PC-3 (cell line): ENCODE measurements at regions of chrX and their contacts with region 1.

Region 1: GRCh38 chrX:100636321-100636991 is at the start of gene TSPAN6:
- DNase-seq: peak; percentile 91
- ATAC-seq: peak; percentile 100
- H3K4me3 ChIP-seq: peak within 1 kb of the TSS; percentile 84
- H3K27ac ChIP-seq: no peak within 1 kb of the TSS
- H3K4me1 ChIP-seq: peaks cover 12% of the 10 kb centered on the region
- H3K27me3 ChIP-seq: no peaks in the 10 kb centered on the region
- CTCF ChIP-seq: peak; percentile 72
- total RNA-seq, gene TSPAN6: 35.2 and 47.4 TPM in 2 replicates

Region 2: GRCh38 chrX:98897191-98897590 is 1739.3 kb before region 1 on chrX:
- CTCF ChIA-PET with region 1: no interaction called
- POLR2A ChIA-PET with region 1: no interaction called
- intact Hi-C with region 1: no loop called
- DNase-seq: no peak
- ATAC-seq: no peak
- H3K4me3 ChIP-seq: no peak overlapping the region
- H3K27ac ChIP-seq: no peak overlapping the region
- H3K4me1 ChIP-seq: no peaks in the 10 kb centered on the region
- H3K27me3 ChIP-seq: no peaks in the 10 kb centered on the region
- CTCF ChIP-seq: no peak

Region 3: GRCh38 chrX:100615005-100615404 is 21.5 kb before region 1 on chrX:
- CTCF ChIA-PET with region 1: interaction called, 21 read pairs
- POLR2A ChIA-PET with region 1: no interaction called
- intact Hi-C with region 1: loop called (anchors 1 kb)
- DNase-seq: peak; percentile 78
- ATAC-seq: peak; percentile 63
- H3K4me3 ChIP-seq: no peak overlapping the region
- H3K27ac ChIP-seq: no peak overlapping the region
- H3K4me1 ChIP-seq: no peaks in the 10 kb centered on the region
- H3K27me3 ChIP-seq: no peaks in the 10 kb centered on the region
- CTCF ChIP-seq: peak; percentile 67

Region 4: GRCh38 chrX:100662796-100663195 is 26.3 kb after region 1 on chrX:
- CTCF ChIA-PET with region 1: no interaction called
- POLR2A ChIA-PET with region 1: no interaction called
- intact Hi-C with region 1: loop called (anchors 2 kb)
- DNase-seq: no peak
- ATAC-seq: no peak
- H3K4me3 ChIP-seq: no peak overlapping the region
- H3K27ac ChIP-seq: no peak overlapping the region
- H3K4me1 ChIP-seq: peaks cover 20% of the 10 kb centered on the region
- H3K27me3 ChIP-seq: no peaks in the 10 kb centered on the region
- CTCF ChIP-seq: no peak

Region 5: GRCh38 chrX:100695302-100695701 is 58.8 kb after region 1 on chrX:
- CTCF ChIA-PET with region 1: no interaction called
- POLR2A ChIA-PET with region 1: no interaction called
- intact Hi-C with region 1: no loop called
- DNase-seq: peak; percentile 54
- ATAC-seq: no peak
- H3K4me3 ChIP-seq: no peak overlapping the region
- H3K27ac ChIP-seq: peak overlapping the region; percentile 76
- H3K4me1 ChIP-seq: peaks cover 25% of the 10 kb centered on the region
- H3K27me3 ChIP-seq: no peaks in the 10 kb centered on the region
- CTCF ChIP-seq: no peak

Region 6: DNA sequence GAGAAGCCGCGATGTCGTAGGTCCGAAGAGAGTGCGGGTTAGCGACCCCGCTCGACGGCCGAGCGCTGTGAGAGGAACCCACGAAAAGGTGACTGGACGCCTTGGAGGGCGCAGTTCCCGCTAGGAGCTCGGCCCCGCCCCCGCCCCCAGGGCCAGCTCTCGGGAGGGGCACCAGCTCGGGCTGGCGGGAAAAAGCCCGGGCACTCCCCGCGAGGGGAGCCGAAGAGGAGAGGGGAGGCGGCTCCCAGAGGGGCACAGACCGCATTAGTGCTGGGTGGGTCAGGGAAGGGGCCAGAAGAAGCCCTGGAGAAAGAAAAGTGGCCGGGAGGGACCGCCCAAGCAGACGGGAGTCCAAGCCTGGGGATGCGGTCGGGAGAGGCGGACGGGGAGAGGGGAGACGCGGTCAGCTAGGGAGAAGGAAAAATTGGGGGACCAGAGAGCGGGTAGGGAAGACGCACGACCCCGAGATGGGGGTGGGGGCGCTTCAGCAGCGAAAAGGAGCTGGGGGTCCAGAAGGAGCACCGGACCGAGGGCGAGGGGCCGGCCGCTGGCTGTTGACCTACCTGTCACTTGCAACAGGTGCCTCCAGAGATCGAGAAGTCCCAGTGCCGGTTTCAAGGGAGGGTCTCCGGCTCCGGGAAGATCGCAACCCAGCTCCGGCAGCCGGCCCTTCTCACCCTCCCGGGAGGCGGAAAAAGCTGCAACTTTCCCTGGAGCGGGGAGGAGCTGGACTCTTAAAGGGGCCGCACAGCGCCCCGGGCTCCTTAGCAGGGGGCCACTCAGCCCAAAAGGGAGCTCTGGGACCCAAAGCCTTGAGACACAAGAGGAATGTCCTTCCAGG is 95.2 kb after region 1 on chrX and contains the start of gene SYTL4:
- CTCF ChIA-PET with region 1: no interaction called
- POLR2A ChIA-PET with region 1: no interaction called
- intact Hi-C with region 1: no loop called
- DNase-seq: peak; percentile 20
- ATAC-seq: peak; percentile 93
- H3K4me3 ChIP-seq: peak within 1 kb of the TSS; percentile 87
- H3K27ac ChIP-seq: no peak within 1 kb of the TSS
- H3K4me1 ChIP-seq: no peaks in the 10 kb centered on the region; the same call in 1 of the 2 replicates
- H3K27me3 ChIP-seq: no peaks in the 10 kb centered on the region
- CTCF ChIP-seq: no peak
- total RNA-seq, gene SYTL4: 2.7 and 3.2 TPM in 2 replicates

Region 7: DNA sequence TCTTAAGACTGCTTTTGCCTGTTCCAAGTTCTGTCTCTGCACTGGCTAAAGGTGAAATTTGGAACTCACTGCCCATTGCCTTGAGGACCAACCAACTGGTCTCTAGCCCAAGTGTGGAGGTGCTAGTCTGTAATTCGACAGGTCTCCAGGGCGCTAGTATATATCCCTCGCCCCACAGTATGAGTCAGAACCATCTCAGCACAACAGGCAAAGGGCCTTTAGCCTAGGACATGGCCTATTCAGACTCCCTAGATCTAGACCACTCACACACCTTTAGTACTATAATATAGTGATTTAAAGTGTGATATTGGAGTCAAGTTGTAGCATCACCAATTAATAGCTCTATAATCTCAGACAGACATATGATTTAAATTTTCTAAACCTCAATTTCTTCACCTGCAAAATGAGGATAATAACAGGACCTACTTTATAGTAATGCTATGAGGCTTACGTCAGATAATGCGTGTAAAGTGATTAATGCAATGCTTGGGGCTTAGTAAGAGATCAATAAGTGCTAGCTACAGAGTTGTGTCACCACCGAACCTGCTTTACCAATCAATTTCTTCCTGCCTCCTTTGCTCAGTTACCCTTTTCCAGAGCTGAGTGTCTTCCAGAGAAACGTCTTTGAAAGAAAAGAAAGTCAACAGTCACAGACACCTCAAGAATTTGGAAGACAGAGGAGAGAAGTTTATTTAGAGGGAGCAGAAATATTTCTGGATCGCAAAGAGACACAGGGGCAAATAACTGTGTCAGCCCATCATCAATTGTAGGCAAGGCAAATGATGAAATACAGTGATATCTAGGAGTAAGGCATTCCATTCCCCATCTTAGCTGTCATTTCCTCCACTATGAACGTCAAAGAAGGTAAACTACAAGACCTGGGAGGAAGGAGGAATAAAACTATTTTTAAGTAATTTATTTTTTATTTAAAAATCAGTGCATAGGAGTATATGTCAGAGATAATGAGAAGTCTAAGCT is 235.4 kb after region 1 on chrX:
- CTCF ChIA-PET with region 1: no interaction called
- POLR2A ChIA-PET with region 1: no interaction called
- intact Hi-C with region 1: no loop called
- DNase-seq: no peak
- ATAC-seq: no peak
- H3K4me3 ChIP-seq: no peak overlapping the region
- H3K27ac ChIP-seq: no peak overlapping the region
- H3K4me1 ChIP-seq: peaks cover 5% of the 10 kb centered on the region; the same call in 1 of the 2 replicates
- H3K27me3 ChIP-seq: no peaks in the 10 kb centered on the region
- CTCF ChIP-seq: no peak